ENCODE measurements at regions of chr2 and their contacts with region 1.

Region 1: GRCh38 chr2:179129574-179130238 is 79.8 kb upstream of the CCDC141 start:
- DNase-seq: no peak
- ATAC-seq: peak; percentile 79
- H3K4me3 ChIP-seq: no peak overlapping the region
- H3K27ac ChIP-seq: no peak overlapping the region
- H3K4me1 ChIP-seq: no peaks in the 10 kb centered on the region
- H3K27me3 ChIP-seq: no peaks in the 10 kb centered on the region
- CTCF ChIP-seq: peak; percentile 57 to 76 (median 63); a peak in 5 of 6 replicates
- EP300 ChIP-seq: no peak
- POLR2A ChIP-seq: no peak
- RAD21 ChIP-seq: peak; percentile 90

Region 2: DNA sequence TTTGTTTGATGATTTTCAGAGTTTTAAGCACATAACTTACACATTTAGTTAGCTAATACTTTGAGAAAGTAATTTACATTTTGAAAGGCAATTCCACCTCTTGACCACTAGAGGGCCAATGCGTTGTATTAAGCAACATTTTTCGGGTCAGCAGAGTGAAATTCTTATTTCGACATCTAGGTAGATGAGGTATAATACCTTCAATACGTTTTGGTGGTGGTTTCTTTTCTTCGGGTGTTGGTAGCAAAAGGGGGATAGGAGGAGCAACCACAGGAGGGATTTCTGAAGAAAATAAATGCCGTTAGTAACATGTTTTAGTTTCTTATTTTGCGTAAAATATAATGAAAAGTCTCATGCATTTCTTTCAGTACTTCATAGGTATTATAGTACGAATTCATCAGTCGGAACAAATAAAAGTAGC is 428.8 kb before region 1 on chr2:
- CTCF ChIA-PET with region 1: interaction called, 10 read pairs
- POLR2A ChIA-PET with region 1: no interaction called
- RAD21 ChIA-PET with region 1: interaction called, 3 read pairs
- SMC1A ChIA-PET with region 1: interaction called, 3 read pairs
- in situ Hi-C with region 1: no loop called
- intact Hi-C with region 1: no loop called
- DNase-seq: no peak
- ATAC-seq: peak; percentile 55
- H3K4me3 ChIP-seq: no peak overlapping the region
- H3K27ac ChIP-seq: no peak overlapping the region
- H3K4me1 ChIP-seq: no peaks in the 10 kb centered on the region
- H3K27me3 ChIP-seq: no peaks in the 10 kb centered on the region
- CTCF ChIP-seq: peak; percentile 69 to 94 (median 87)
- EP300 ChIP-seq: no peak
- POLR2A ChIP-seq: no peak
- RAD21 ChIP-seq: peak; percentile 42; the same call in 1 of the 2 replicates

Region 3: DNA sequence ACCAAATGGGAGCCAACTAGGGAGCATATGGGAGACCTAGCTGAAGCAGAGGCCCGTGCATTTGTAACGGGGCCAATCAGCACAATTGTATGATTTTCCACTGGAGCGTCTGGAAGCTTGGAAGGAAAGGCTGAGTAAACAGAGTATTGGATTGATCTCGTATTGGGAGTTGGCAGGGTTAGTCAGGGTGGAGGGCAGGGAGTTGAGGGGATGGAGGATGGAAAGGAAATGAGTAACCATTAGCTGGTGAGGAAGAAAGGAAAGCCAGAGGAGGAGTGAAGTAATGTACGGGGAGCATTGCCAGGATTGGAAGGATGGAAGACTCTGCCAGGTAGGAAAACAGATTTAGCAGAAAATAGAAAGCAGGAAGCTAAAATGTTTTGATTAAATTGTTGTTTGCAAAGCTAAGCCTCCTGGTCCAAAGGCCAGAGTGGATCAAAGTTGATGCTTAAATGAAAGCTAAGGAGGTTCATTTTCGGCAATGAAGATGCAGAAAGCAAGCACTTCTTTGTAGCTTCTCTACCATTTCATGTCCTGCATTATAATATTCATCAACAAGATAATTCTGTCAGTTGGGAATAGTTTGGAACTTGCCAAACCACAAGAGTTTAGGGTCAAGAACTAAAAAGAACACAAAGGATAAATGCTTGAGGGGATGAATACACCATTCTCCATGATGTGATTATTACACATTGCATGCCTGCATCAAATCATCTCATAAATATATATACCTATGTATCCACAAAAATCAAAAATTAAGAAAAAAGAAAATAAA is 246.9 kb before region 1 on chr2:
- CTCF ChIA-PET with region 1: interaction called, 191 read pairs
- POLR2A ChIA-PET with region 1: no interaction called
- RAD21 ChIA-PET with region 1: interaction called, 119 read pairs
- SMC1A ChIA-PET with region 1: interaction called, 151 read pairs
- in situ Hi-C with region 1: no loop called
- intact Hi-C with region 1: no loop called
- DNase-seq: no peak
- ATAC-seq: no peak
- H3K4me3 ChIP-seq: no peak overlapping the region
- H3K27ac ChIP-seq: no peak overlapping the region
- H3K4me1 ChIP-seq: no peaks in the 10 kb centered on the region
- H3K27me3 ChIP-seq: no peaks in the 10 kb centered on the region
- CTCF ChIP-seq: no peak
- EP300 ChIP-seq: no peak
- POLR2A ChIP-seq: no peak
- RAD21 ChIP-seq: no peak

Region 4: DNA sequence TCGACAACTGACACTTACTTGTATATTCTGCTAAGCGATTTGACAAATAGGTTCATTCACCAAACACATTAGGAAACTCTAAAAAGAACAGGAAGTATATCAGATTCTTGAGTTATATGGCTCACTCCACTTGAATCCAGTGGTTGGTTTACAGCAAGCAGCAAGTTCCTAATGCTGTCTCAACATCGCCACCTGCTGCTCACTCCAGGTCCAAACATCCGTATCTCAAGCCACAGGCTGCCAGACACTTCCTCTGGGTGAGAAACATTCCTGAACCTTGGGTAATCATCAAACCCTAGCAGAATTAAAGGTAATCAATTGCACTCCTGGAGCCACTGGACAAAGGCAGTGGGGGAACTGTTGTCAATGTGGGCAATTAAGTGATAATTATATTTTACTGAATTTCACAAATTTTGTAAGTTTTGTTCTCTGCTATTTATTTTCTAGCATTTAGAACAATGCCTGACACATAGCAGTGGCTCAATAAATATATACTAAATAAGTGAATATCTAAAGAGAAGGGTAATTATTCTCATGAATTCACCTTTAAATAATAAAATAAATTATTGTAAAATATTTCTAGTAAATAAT is 215.4 kb before region 1 on chr2:
- CTCF ChIA-PET with region 1: interaction called, 100 read pairs
- POLR2A ChIA-PET with region 1: interaction called, 3 read pairs
- RAD21 ChIA-PET with region 1: interaction called, 34 read pairs
- SMC1A ChIA-PET with region 1: interaction called, 78 read pairs
- in situ Hi-C with region 1: no loop called
- intact Hi-C with region 1: loop called (anchors 1 kb)
- DNase-seq: peak; percentile 39
- ATAC-seq: peak; percentile 95
- H3K4me3 ChIP-seq: no peak overlapping the region
- H3K27ac ChIP-seq: no peak overlapping the region
- H3K4me1 ChIP-seq: no peaks in the 10 kb centered on the region
- H3K27me3 ChIP-seq: no peaks in the 10 kb centered on the region
- CTCF ChIP-seq: peak; percentile 75 to 84 (median 75)
- EP300 ChIP-seq: no peak
- POLR2A ChIP-seq: no peak
- RAD21 ChIP-seq: peak; percentile 59

Region 5: DNA sequence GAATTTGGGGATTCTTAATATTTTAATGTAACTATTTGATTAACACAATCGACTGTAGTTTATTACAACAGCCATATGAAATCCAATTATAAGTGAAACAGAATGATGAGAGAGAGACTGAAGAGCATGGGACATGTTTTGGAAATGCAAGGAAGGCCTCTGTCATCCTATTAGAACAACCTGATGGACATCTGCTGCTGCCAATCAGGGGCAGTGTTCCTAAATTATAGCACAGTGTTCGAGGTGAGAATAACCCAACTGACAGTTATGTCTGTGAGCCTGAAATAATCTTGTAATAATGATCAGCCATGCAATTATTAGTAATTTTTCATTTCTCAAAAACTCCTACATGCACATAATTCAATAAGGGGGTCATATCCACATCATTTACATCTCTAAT is 153.4 kb before region 1 on chr2:
- CTCF ChIA-PET with region 1: interaction called, 17 read pairs
- POLR2A ChIA-PET with region 1: no interaction called
- RAD21 ChIA-PET with region 1: interaction called, 25 read pairs
- SMC1A ChIA-PET with region 1: interaction called, 32 read pairs
- in situ Hi-C with region 1: no loop called
- intact Hi-C with region 1: no loop called
- DNase-seq: no peak
- ATAC-seq: no peak
- H3K4me3 ChIP-seq: no peak overlapping the region
- H3K27ac ChIP-seq: no peak overlapping the region
- H3K4me1 ChIP-seq: no peaks in the 10 kb centered on the region
- H3K27me3 ChIP-seq: no peaks in the 10 kb centered on the region
- CTCF ChIP-seq: no peak
- EP300 ChIP-seq: no peak
- POLR2A ChIP-seq: no peak
- RAD21 ChIP-seq: no peak

Region 6: GRCh38 chr2:179037807-179038206 is 91.9 kb before region 1 on chr2:
- CTCF ChIA-PET with region 1: interaction called, 10 read pairs
- POLR2A ChIA-PET with region 1: interaction called, 3 read pairs
- RAD21 ChIA-PET with region 1: interaction called, 37 read pairs
- SMC1A ChIA-PET with region 1: interaction called, 42 read pairs
- in situ Hi-C with region 1: no loop called
- intact Hi-C with region 1: no loop called
- DNase-seq: no peak
- ATAC-seq: peak; percentile 69
- H3K4me3 ChIP-seq: no peak overlapping the region
- H3K27ac ChIP-seq: no peak overlapping the region
- H3K4me1 ChIP-seq: peaks cover 19% of the 10 kb centered on the region
- H3K27me3 ChIP-seq: no peaks in the 10 kb centered on the region
- CTCF ChIP-seq: no peak
- EP300 ChIP-seq: no peak; a peak in 1 of 4 replicates
- POLR2A ChIP-seq: no peak
- RAD21 ChIP-seq: no peak

Region 7: GRCh38 chr2:179106676-179107428 is 22.9 kb before region 1 on chr2:
- CTCF ChIA-PET with region 1: interaction called, 32 read pairs
- POLR2A ChIA-PET with region 1: interaction called, 4 read pairs
- RAD21 ChIA-PET with region 1: interaction called, 33 read pairs
- SMC1A ChIA-PET with region 1: interaction called, 40 read pairs
- in situ Hi-C with region 1: no loop called
- intact Hi-C with region 1: no loop called
- DNase-seq: peak; percentile 56
- ATAC-seq: peak; percentile 87
- H3K4me3 ChIP-seq: no peak overlapping the region
- H3K27ac ChIP-seq: no peak overlapping the region
- H3K4me1 ChIP-seq: peaks cover 14% of the 10 kb centered on the region; the same call in 1 of the 2 replicates
- H3K27me3 ChIP-seq: no peaks in the 10 kb centered on the region
- CTCF ChIP-seq: no peak
- EP300 ChIP-seq: 0 out of 4 replicates have a peak, but pooled peaks of 1 of the 2 experiments have one; percentile 44
- POLR2A ChIP-seq: no peak
- RAD21 ChIP-seq: no peak

Region 8: DNA sequence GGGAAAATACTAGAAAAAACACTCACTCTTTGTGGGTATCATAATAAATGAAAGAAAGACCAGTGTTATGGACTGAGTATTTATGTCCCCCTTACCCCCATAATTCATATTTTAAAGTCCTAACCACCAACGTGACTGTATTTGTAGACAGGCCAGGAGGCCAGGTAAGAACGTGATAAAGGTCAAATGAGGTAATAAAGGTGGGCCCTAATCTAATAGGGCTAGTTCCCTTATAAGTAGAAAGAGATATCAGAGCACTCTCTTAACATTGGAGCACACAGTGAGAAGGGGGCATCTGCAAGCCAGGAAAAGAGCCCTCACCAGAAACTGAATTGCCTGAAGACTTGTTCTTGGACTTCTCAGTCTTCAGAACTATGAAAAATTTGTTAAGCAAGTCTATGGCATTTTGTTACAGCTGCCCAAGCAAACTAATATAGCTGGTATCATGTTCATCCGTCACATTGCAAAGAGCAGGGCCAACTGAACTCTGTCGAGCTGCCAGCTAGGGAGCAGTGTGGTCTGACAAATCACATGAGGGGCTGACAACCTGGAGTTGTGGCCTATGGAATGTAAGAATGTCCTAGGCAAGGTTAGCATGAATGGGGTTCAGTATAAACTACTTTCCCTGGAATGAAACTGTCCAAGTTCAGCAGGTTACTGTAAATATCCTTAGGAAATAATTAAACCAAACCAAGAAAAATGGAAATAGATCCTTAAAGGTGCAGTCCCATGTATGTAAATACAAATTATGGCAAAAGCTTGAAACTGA is 450.9 kb after region 1 on chr2:
- CTCF ChIA-PET with region 1: no interaction called
- POLR2A ChIA-PET with region 1: no interaction called
- RAD21 ChIA-PET with region 1: no interaction called
- SMC1A ChIA-PET with region 1: no interaction called
- in situ Hi-C with region 1: no loop called
- intact Hi-C with region 1: no loop called
- DNase-seq: no peak
- ATAC-seq: no peak
- H3K4me3 ChIP-seq: no peak overlapping the region
- H3K27ac ChIP-seq: no peak overlapping the region
- H3K4me1 ChIP-seq: no peaks in the 10 kb centered on the region
- H3K27me3 ChIP-seq: no peaks in the 10 kb centered on the region
- CTCF ChIP-seq: no peak
- EP300 ChIP-seq: no peak
- POLR2A ChIP-seq: no peak
- RAD21 ChIP-seq: no peak